ENCODE measurements at regions of chr9 and their contacts with region 1.

Region 1: GRCh38 chr9:22105005-22105722 is 96.1 kb upstream of the CDKN2B start:
- DNase-seq: no peak
- H3K4me3 Mint-ChIP-seq: no peak overlapping the region
- H3K27ac Mint-ChIP-seq: peak overlapping the region; percentile 86
- H3K4me1 Mint-ChIP-seq: peaks cover 69% of the 10 kb centered on the region
- H3K27me3 Mint-ChIP-seq: no peaks in the 10 kb centered on the region
- CTCF ChIP-seq: no peak

Region 2: GRCh38 chr9:22037954-22038690 is 67.0 kb before region 1 on chr9:
- CTCF ChIA-PET with region 1: interaction called, 3 read pairs
- intact Hi-C with region 1: loop called (anchors 5 kb)
- DNase-seq: no peak
- H3K4me3 Mint-ChIP-seq: no peak overlapping the region
- H3K27ac Mint-ChIP-seq: no peak overlapping the region
- H3K4me1 Mint-ChIP-seq: peaks cover 26% of the 10 kb centered on the region
- H3K27me3 Mint-ChIP-seq: no peaks in the 10 kb centered on the region
- CTCF ChIP-seq: peak; percentile 32

Region 3: DNA sequence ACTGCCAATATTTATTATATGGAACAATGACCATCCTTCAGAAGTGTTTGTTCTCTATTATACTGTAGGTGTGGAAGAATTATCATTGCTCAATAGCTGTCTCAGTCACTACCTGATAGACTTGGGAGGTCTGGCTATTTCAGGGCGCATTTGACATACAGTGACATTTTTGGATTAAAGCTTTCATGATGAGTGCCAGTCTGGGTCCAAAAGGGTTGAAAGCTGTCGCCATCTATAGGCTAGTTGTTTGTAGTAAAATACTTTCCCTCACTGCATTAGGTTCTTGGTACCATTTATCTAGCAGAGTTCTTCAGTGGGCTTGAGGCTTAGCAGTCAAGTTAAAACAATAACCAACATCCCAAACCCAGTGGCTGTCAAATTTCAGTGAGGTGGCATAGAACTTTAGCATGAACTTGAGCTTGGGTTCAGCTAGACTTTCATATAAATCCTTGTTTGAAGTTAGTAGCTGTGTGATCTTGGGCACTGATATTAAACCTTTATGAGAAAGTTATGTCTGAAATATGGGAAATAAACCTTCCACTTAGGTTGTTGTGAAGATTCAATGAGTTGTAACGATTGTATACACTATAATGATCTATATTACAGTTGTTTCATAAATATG is 14.5 kb after region 1 on chr9:
- CTCF ChIA-PET with region 1: interaction called, 10 read pairs
- intact Hi-C with region 1: no loop called
- DNase-seq: peak; percentile 21
- H3K4me3 Mint-ChIP-seq: no peak overlapping the region
- H3K27ac Mint-ChIP-seq: peak overlapping the region; percentile 93
- H3K4me1 Mint-ChIP-seq: peaks cover 61% of the 10 kb centered on the region
- H3K27me3 Mint-ChIP-seq: no peaks in the 10 kb centered on the region
- CTCF ChIP-seq: no peak

Measured in Calu3 (cell line).